ENCODE measurements at regions of chr16 and their contacts with region 1.

Region 1: DNA sequence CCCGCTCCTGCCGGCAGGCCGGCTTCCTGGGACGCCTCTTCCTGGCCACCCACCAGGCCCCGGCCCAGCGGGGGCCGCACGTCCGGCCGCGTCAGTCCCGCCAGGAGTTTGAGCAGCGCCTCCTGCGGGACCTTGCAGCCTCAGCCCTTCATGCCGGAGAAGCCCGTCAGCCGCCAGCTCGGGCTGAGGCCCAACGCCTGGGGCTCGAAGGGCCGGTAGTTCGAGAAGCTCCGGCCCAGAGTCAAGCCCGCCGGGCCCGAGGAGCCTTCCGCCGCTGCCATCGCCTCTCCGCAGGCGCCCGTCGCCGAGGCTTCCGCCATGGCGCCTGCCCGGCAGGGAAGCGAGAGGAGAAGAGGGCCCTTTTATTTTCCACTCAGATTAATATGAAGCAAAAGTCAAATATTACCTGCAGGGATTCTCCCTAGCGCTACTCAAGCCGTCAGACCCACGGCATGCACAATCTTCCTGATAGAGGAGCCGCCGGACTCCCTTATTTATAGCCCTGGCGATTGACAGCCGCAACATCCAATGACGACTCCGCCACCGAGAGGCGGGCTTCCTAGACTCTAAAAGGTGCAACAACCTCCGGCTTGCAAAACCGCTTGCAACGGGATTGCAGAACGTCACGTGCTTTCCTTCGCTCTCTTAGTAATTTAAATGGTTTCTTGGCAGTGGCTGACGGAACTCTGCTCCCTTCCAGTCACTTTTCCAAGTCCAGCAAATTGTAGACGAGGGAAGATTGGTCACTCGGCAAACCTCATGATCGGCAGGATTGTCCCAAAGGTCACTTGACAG is at the start of gene SEPHS2:
- DNase-seq: peak; percentile 97
- H3K4me3 ChIP-seq: peak within 1 kb of the TSS; percentile 57 to 79 (median 68)
- H3K27ac ChIP-seq: peak within 1 kb of the TSS; percentile 72
- H3K4me1 ChIP-seq: peaks cover 11% of the 10 kb centered on the region
- H3K27me3 ChIP-seq: no peaks in the 10 kb centered on the region
- CTCF ChIP-seq: peak; percentile 29 to 53
- POLR2A ChIP-seq: peak; percentile 93
- total RNA-seq, gene SEPHS2: 32.0 and 32.8 TPM in 2 replicates

Region 2: GRCh38 chr16:30417529-30418349 is 27.9 kb before region 1 on chr16:
- CTCF ChIA-PET with region 1: interaction called, 7 read pairs
- POLR2A ChIA-PET with region 1: interaction called, 4 read pairs
- dilution Hi-C with region 1: no loop called
- intact Hi-C with region 1: loop called (anchors 1 kb)
- DNase-seq: peak; percentile 96
- H3K4me3 ChIP-seq: peak overlapping the region in 2 of 3 experiments; percentile 44 to 57
- H3K27ac ChIP-seq: no peak overlapping the region
- H3K4me1 ChIP-seq: peaks cover 3% of the 10 kb centered on the region
- H3K27me3 ChIP-seq: no peaks in the 10 kb centered on the region
- CTCF ChIP-seq: peak in 1 of 2 donors; percentile 37
- POLR2A ChIP-seq: peak; percentile 42

Region 3: GRCh38 chr16:30526823-30527635 is 81.4 kb after region 1 on chr16:
- CTCF ChIA-PET with region 1: interaction called, 5 read pairs
- POLR2A ChIA-PET with region 1: no interaction called
- dilution Hi-C with region 1: no loop called
- intact Hi-C with region 1: loop called (anchors 2 kb)
- DNase-seq: peak; percentile 98
- H3K4me3 ChIP-seq: peak overlapping the region; percentile 58 to 67 (median 65)
- H3K27ac ChIP-seq: peak overlapping the region; percentile 80
- H3K4me1 ChIP-seq: peaks cover 4% of the 10 kb centered on the region
- H3K27me3 ChIP-seq: no peaks in the 10 kb centered on the region
- CTCF ChIP-seq: peak; percentile 13 to 56
- POLR2A ChIP-seq: peak; percentile 58

Region 4: GRCh38 chr16:30609926-30610839 is 164.6 kb after region 1 on chr16 and contains the start of gene ZNF689:
- CTCF ChIA-PET with region 1: interaction called, 9 read pairs
- POLR2A ChIA-PET with region 1: no interaction called
- dilution Hi-C with region 1: no loop called
- intact Hi-C with region 1: loop called (anchors 1 kb)
- DNase-seq: peak; percentile 98
- H3K4me3 ChIP-seq: peak within 1 kb of the TSS; percentile 29 to 77 (median 70)
- H3K27ac ChIP-seq: peak within 1 kb of the TSS; percentile 79
- H3K4me1 ChIP-seq: peaks cover 4% of the 10 kb centered on the region
- H3K27me3 ChIP-seq: no peaks in the 10 kb centered on the region
- CTCF ChIP-seq: no peak
- POLR2A ChIP-seq: peak; percentile 74
- total RNA-seq, gene ZNF689: 6.8 and 8.4 TPM in 2 replicates

Region 5: DNA sequence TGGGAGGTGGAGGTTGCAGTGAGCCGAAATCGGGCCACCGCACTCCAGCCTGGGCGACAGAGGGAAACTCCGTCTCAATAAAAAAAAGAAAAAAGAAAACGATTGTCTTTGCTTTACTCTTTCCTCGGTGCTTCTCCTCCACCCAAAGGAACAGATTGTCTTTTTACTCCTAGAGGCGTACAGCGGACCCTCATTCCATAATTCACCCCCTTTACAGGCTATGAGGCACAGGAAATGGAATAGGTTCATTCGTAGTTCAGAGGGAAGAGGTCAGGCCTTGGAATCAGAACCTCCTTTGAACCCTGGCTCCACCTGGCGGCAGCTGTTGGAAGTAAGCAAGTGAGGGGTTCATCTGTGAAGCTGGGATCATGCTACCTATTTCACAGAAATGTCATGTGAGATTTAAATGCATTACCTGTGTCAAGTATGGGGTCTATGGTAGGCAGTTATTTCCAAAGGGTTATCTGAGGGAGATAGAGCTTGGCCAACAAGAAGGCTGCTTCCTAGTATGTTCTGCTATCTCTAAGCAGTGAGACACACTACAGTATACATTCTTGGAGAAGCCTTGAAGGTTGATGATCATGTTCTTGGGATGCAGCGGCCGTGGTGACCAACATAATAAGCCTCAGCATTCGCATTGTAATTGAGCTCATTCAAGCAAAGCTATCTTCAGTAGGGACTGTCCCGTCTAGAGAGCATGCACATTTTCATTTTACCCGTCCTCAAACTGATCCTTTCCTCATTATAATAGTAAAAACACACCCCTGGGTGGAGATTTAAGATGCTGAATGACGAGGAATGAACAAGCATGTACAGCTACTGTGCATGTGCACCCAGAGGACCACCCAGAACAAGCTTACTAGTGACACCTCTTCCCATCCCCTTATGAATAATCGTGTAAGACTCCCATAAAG is 183.3 kb after region 1 on chr16:
- CTCF ChIA-PET with region 1: interaction called, 5 read pairs
- POLR2A ChIA-PET with region 1: no interaction called
- dilution Hi-C with region 1: no loop called
- intact Hi-C with region 1: loop called (anchors 1 kb)
- DNase-seq: peak; percentile 77
- H3K4me3 ChIP-seq: peak overlapping the region in 1 of 3 experiments; percentile 27
- H3K27ac ChIP-seq: no peak overlapping the region
- H3K4me1 ChIP-seq: peaks cover 3% of the 10 kb centered on the region
- H3K27me3 ChIP-seq: peaks cover 2% of the 10 kb centered on the region in 2 experiments
- CTCF ChIP-seq: peak; percentile 85 to 91
- POLR2A ChIP-seq: no peak